OCI-LY7 (cell line): ENCODE measurements at regions of chr13 and their contacts with region 1.

Region 1: GRCh38 chr13:79480954-79481684 is at the start of gene NDFIP2:
- DNase-seq: peak; percentile 52
- H3K4me3 ChIP-seq: peak within 1 kb of the TSS; percentile 72
- H3K27ac ChIP-seq: no peak within 1 kb of the TSS
- H3K4me1 ChIP-seq: peaks cover 9% of the 10 kb centered on the region
- CTCF ChIP-seq: no peak
- total RNA-seq, gene NDFIP2: 0.18 and 0.54 TPM in 2 replicates

Region 2: DNA sequence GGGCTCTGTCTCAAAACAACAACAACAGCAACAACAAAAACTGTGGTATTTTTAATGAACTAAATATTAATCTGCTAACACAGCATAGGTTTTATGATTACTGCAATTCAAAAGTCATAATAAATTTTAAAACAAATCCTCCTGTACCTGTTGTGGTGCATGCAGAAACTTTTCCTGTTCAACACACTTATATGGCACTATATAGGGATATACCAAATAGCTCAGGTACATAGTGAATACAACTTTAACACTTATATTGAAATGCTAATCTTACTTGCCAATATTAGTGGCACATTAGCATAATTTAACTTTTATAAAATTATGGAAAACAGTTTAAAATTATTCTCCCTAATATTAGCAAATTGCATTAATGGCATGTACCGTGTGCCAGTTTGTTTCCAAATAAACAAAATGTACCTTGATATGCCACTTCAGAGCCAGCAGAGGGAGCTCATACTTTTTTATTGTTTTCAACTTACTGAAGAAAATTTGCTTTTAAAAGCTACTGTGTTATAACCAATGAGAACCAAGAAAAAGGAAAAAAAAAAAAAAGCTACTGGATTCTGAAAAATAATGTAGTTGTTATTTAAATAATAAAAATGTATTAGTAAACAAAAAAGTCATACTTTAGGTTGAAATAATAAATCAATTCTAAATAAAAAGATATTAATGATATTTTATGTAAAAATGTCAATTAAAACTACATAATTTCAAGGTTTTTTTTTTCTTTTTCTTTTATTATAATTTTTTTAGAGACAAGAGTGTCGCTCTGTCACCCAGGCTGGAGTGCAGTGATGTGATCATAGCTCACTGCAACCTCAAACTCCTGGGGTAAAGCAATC is 57.1 kb before region 1 on chr13:
- CTCF ChIA-PET with region 1: interaction called, 3 read pairs
- POLR2A ChIA-PET with region 1: interaction called, 10 read pairs
- intact Hi-C with region 1: no loop called
- DNase-seq: peak; percentile 54
- H3K4me3 ChIP-seq: no peak overlapping the region
- H3K27ac ChIP-seq: no peak overlapping the region
- H3K4me1 ChIP-seq: no peaks in the 10 kb centered on the region
- CTCF ChIP-seq: peak; percentile 89

Region 3: GRCh38 chr13:79604752-79605151 is 123.6 kb after region 1 on chr13:
- CTCF ChIA-PET with region 1: no interaction called
- POLR2A ChIA-PET with region 1: no interaction called
- intact Hi-C with region 1: no loop called
- DNase-seq: no peak
- H3K4me3 ChIP-seq: no peak overlapping the region
- H3K27ac ChIP-seq: no peak overlapping the region
- H3K4me1 ChIP-seq: no peaks in the 10 kb centered on the region
- CTCF ChIP-seq: no peak